PC-9 (cell line): ENCODE measurements at regions of chr16 and their contacts with region 1.

Region 1: GRCh38 chr16:29825145-29826044 is 5.1 kb downstream of the MVP start:
- DNase-seq: peak; percentile 66 to 74
- H3K4me3 ChIP-seq: no peak overlapping the region; the same call in 1 of the 2 replicates
- H3K27ac ChIP-seq: peak overlapping the region; percentile 59
- H3K4me1 ChIP-seq: peaks cover 53% of the 10 kb centered on the region
- H3K27me3 ChIP-seq: no peaks in the 10 kb centered on the region
- CTCF ChIP-seq: no peak

Region 2: DNA sequence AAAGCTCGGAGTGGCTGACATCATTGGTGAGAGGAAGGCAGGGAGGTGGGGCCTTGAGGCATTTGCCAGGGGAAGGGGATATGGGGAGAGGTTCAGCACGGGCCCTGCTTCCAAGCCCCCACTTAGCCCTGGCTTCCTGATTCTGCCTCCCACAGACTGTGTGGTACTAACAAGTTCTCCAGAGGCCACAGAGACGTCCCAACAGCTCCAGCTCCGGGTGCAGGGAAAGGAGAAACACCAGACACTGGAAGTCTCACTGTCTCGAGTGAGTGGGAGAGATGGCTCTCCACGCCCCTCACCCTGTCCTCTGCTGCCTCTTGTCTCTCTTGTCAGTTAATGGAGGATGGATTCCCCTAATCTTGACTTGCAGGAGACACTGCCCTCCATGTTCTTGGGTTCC is 866.6 kb before region 1 on chr16:
- CTCF ChIA-PET with region 1: no interaction called
- POLR2A ChIA-PET with region 1: interaction called, 14 read pairs
- intact Hi-C with region 1: no loop called
- DNase-seq: no peak
- H3K4me3 ChIP-seq: no peak overlapping the region
- H3K27ac ChIP-seq: no peak overlapping the region
- H3K4me1 ChIP-seq: no peaks in the 10 kb centered on the region
- H3K27me3 ChIP-seq: no peaks in the 10 kb centered on the region
- CTCF ChIP-seq: no peak

Region 3: GRCh38 chr16:29775742-29776408 is 49.5 kb before region 1 on chr16:
- CTCF ChIA-PET with region 1: no interaction called
- POLR2A ChIA-PET with region 1: no interaction called
- intact Hi-C with region 1: no loop called
- DNase-seq: peak; percentile 71 to 79
- H3K4me3 ChIP-seq: no peak overlapping the region
- H3K27ac ChIP-seq: no peak overlapping the region
- H3K4me1 ChIP-seq: peaks cover 68% of the 10 kb centered on the region
- H3K27me3 ChIP-seq: no peaks in the 10 kb centered on the region
- CTCF ChIP-seq: no peak

Region 4: DNA sequence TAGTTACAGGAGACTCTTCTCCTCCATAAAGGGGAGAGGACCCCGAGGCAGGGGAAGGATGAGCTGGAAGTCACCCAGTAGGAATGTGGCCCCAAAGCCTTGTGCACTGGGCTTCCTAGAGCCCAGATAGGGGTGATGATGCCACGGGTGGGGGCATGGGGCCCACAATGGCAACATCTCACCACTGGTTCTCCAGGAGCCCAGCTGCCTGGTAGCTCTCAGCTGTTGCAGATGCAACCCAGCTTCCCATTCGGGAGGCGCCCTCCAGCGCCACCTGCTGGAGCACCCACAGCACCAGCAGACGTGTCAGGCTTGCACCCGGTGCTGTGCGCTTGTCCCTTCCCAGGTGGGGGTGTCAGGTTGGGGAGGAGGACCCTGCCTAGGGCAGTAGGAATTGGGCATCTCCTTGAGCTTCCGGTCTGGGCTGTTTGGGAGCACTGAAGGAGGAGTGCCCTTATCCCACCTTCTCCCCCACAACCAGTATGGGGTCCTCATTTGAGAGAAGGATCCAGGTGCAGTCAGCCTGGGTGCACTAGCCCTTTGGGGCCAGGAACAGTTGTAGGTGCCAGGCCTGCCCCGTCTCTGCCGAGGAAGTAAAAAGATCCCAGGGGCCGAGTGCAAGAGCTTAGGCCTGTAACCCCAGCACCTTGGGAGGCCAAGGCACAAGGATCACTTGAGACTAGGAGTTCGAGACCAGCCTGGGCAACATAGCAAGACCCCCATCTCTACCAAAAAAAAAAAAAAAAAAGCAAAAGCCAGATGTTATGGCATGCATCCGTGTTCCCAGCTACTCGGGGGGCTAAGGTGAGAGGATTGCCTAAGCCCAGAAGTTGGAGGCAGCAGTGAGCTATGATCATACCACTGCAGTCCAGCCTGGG is 23.3 kb after region 1 on chr16:
- CTCF ChIA-PET with region 1: interaction called, 18 read pairs
- POLR2A ChIA-PET with region 1: interaction called, 30 read pairs
- intact Hi-C with region 1: loop called (anchors 1 kb)
- DNase-seq: peak in 1 of 2 experiments; percentile 75
- H3K4me3 ChIP-seq: no peak overlapping the region
- H3K27ac ChIP-seq: no peak overlapping the region
- H3K4me1 ChIP-seq: no peaks in the 10 kb centered on the region
- H3K27me3 ChIP-seq: no peaks in the 10 kb centered on the region
- CTCF ChIP-seq: peak; percentile 90

Region 5: GRCh38 chr16:29857133-29857760 is 31.9 kb after region 1 on chr16:
- CTCF ChIA-PET with region 1: interaction called, 10 read pairs
- POLR2A ChIA-PET with region 1: interaction called, 32 read pairs
- intact Hi-C with region 1: loop called (anchors 2 kb)
- DNase-seq: no peak
- H3K4me3 ChIP-seq: no peak overlapping the region
- H3K27ac ChIP-seq: no peak overlapping the region
- H3K4me1 ChIP-seq: peaks cover 9% of the 10 kb centered on the region
- H3K27me3 ChIP-seq: no peaks in the 10 kb centered on the region
- CTCF ChIP-seq: no peak

Region 6: DNA sequence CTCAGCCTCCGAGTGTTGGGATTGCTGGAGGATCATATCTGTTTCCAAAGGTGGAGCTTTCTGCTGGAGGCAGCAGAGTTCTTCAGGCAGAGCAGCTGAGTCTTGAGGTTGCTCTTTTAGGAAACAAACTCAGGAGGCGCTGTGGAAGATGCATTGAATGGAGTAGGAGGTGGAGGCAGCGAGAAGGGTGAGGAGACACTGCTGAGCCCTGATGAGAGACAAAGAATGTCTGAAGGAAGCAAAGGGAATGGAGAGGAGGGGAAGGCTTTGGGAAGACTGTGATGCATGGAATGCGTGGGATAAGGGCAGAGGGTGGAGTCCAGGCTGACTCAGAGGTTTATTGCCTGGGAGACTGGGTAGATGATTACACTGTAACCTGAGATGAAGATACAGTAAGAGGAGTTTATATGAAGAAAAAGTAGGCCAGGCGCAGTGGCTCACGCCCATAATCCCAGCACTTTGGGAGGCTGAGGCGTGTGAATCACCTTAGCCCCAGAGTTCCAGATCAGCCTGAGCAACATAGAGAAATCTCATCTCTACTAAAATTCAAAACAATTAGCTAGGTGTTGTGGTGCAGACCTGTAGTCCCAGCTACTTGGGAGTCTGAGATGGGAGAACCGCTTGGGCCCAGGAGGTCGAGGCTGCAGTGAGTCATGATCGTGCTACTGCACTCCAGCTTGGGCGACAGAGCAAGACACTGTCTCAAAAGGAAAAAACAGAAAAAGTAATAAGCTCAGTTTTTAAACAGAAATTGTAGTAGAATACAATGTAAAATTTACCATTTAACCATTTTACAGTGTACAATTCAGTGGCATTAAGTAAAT is 118.7 kb after region 1 on chr16:
- CTCF ChIA-PET with region 1: no interaction called
- POLR2A ChIA-PET with region 1: interaction called, 16 read pairs
- intact Hi-C with region 1: no loop called
- DNase-seq: peak; percentile 92 to 99
- H3K4me3 ChIP-seq: peak overlapping the region; percentile 47; the same call in 1 of the 2 replicates
- H3K27ac ChIP-seq: peak overlapping the region; percentile 94
- H3K4me1 ChIP-seq: peaks cover 26% of the 10 kb centered on the region
- H3K27me3 ChIP-seq: no peaks in the 10 kb centered on the region
- CTCF ChIP-seq: peak; percentile 69

Region 7: DNA sequence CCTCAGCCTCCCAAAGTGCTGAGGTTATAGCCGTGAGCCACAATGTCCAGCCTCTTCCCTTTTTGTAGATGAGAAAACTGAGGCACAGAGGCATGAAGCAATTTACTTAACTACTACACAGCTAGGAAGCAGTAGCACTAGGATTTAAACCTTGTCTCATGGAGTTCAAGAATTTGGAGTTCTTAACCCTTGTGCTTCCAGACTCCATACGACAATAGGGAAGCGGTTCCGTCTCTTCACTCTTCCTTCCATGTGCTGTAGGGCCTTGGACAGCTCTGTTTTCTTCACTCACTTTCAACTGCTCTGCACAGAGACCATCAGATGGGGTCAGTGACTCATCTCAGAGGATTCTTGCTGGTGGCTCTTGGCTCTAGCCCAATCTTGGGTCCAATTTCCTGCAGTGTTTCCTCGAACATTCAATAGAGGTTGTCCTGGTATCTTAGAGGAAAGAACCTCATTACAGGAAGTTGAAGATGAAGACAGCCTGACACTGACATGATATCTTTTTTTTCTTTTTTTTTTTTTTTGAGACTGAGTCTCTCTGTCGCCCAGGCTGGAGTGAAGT is 666.4 kb after region 1 on chr16:
- CTCF ChIA-PET with region 1: no interaction called
- POLR2A ChIA-PET with region 1: interaction called, 16 read pairs
- intact Hi-C with region 1: no loop called
- DNase-seq: peak; percentile 86 to 90
- H3K4me3 ChIP-seq: no peak overlapping the region
- H3K27ac ChIP-seq: no peak overlapping the region
- H3K4me1 ChIP-seq: peaks cover 15% of the 10 kb centered on the region
- H3K27me3 ChIP-seq: no peaks in the 10 kb centered on the region
- CTCF ChIP-seq: no peak